Endothelial cell of umbilical vein (primary cell): ENCODE measurements at regions of chr1 and their contacts with region 1.

Region 1: DNA sequence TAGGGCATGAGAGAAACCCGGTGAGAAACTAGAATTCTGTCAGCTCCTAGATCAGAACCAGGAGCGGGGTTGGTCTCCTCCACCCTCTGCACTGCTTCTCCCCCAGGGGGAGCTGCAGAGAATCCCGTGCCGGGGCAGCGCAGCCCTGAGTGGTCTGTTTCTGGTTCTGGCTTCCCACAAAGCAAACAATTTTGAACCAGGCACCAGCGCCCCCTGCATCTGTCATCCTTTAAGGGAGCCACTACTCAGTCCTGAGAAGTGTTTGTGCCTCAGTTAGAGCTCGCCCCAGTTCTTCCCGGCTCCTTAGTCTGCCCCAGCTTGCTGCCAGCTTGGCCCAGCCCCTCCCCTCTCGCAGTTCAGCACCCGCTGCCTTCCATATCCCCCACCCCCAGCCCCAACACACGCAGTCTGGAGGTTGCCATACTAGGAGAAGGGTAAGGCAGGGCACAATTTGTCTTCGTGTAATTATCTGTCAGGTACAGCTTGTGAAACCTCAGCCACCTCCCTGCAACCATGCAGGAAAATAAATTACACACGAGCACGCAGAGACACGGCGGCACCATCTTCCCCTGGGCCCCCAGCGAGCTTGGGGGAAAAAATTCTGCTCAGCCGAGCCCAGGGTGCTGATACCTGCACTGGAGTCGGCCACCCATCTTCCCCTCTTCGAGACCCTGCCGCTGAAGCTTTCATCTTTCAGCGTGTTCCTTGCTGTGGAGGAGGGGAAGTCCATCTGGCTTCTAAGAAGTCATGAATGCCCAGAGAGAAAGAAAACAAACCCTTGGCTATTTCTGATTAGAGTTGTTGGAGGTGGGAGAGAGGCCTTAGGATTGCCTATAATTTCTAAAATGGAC is 62.6 kb upstream of the CD1D start:
- DNase-seq: peak; percentile 52
- H3K4me3 ChIP-seq: no peak overlapping the region
- H3K27ac ChIP-seq: no peak overlapping the region
- H3K4me1 ChIP-seq: peaks cover 2% of the 10 kb centered on the region
- H3K27me3 ChIP-seq: peaks cover 31 to 32% of the 10 kb centered on the region in 2 experiments
- CTCF ChIP-seq: peak; percentile 49 to 57
- POLR2A ChIP-seq: no peak

Region 2: DNA sequence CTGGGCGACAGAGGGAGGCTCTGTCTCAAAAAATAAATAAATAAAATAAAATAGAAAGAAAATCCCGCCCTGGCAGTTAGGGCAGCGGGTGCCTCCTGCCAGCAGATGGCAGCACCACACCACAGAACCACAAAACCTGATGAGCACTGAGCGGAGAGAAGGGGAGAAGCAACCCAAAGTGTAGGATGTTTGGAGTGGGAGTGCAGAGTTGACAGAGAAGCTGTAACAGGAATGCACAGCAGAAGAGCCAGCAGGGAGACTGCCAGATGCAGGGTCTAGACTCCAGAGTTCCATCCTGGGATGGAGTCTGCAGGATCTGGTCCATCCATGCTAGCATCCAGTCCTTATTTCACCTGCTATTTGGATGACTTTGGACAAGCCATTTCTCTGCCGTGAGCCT is 154.4 kb before region 1 on chr1:
- CTCF ChIA-PET with region 1: interaction called, 366 read pairs
- POLR2A ChIA-PET with region 1: interaction called, 4 read pairs
- dilution Hi-C with region 1: no loop called
- intact Hi-C with region 1: loop called (anchors 1 kb)
- DNase-seq: peak; percentile 63
- H3K4me3 ChIP-seq: no peak overlapping the region
- H3K27ac ChIP-seq: no peak overlapping the region
- H3K4me1 ChIP-seq: peaks cover 7% of the 10 kb centered on the region
- H3K27me3 ChIP-seq: peaks cover 10 to 18% of the 10 kb centered on the region in 2 experiments
- CTCF ChIP-seq: peak; percentile 76 to 78
- POLR2A ChIP-seq: no peak

Region 3: DNA sequence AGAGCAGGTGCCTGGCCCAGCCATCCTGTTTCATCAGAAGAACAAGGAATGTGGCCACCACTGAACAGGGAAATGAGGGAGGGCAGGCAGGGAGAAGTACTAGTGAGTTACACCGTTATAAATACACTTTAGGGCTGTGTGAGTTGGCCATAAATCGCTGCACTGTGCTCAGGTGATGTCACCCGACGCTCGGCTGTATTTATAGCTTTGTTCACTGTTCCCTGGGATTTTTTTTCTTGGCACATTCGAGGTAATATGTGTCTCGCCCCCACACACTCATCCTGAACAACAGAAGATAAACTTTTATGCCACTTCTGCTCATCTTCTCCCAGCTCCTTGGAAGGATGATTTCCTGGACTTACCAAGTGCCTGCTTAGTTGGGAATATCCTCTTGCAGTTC is 133.6 kb before region 1 on chr1:
- CTCF ChIA-PET with region 1: interaction called, 460 read pairs
- POLR2A ChIA-PET with region 1: no interaction called
- dilution Hi-C with region 1: no loop called
- intact Hi-C with region 1: no loop called
- DNase-seq: no peak
- H3K4me3 ChIP-seq: no peak overlapping the region
- H3K27ac ChIP-seq: no peak overlapping the region
- H3K4me1 ChIP-seq: no peaks in the 10 kb centered on the region
- H3K27me3 ChIP-seq: peaks cover 38 to 43% of the 10 kb centered on the region in 2 experiments
- CTCF ChIP-seq: no peak
- POLR2A ChIP-seq: no peak

Region 4: GRCh38 chr1:158101927-158102326 is 16.2 kb before region 1 on chr1:
- CTCF ChIA-PET with region 1: interaction called, 56 read pairs
- POLR2A ChIA-PET with region 1: no interaction called
- dilution Hi-C with region 1: no loop called
- intact Hi-C with region 1: no loop called
- DNase-seq: peak; percentile 92
- H3K4me3 ChIP-seq: no peak overlapping the region
- H3K27ac ChIP-seq: peak overlapping the region; percentile 60
- H3K4me1 ChIP-seq: peaks cover 12% of the 10 kb centered on the region
- H3K27me3 ChIP-seq: peaks cover 26 to 30% of the 10 kb centered on the region in 2 experiments
- CTCF ChIP-seq: no peak
- POLR2A ChIP-seq: peak; percentile 35